IMR-90 (cell line): ENCODE measurements at regions of chr3 and their contacts with region 1.

Region 1: DNA sequence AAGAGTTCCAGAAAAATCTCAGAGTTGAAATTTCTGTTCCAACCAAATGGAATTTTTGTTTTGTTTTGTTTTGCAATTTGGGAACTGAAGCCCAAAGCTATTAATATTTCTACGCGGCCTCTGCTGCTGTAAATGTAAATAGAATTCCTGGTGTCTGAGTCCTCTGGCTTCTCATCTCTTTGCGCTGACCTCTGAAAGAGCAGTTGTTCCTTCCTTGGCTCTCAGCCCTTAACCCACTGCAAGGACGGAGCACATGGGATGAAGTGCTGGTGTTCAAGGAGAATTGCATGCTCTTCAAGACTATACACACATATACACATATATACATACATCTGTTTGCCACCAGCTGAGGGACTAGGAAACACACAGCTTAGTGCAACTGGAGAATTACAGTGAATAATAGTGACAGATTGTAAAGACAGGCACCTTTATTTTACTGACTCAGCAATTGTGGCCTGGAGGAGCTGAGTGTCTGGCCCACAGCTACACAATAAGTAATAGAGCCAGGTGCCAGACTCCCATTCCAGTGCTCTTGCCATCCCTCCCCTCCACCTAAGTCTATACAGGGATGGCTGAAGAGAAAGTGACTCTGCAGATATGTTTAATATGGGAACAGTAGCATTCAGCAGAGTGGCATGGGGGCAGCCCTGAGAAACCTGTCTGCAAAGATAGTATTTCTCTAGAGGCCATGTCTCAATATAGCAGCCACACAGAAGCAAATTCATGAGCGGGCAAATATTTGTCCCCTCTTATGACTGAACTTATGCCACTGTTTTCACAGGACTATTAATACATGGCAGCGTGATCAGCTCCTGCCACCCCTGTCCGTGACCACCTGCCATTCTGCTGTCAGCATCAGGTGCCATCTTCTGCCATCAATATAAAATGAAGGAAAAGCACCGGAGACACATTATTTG is 42.3 kb downstream of the NEK10 start:
- DNase-seq: peak; percentile 98
- ATAC-seq: peak; percentile 95
- H3K4me3 ChIP-seq: no peak overlapping the region
- H3K27ac ChIP-seq: peak overlapping the region; percentile 68; the same call in 1 of the 2 replicates
- H3K4me1 ChIP-seq: peaks cover 22% of the 10 kb centered on the region
- H3K27me3 ChIP-seq: no peaks in the 10 kb centered on the region
- CTCF ChIP-seq: no peak
- POLR2A ChIP-seq: no peak
- RAD21 ChIP-seq: no peak

Region 2: GRCh38 chr3:27368831-27369607 is 42.1 kb after region 1 on chr3 and contains the start of gene NEK10:
- CTCF ChIA-PET with region 1: no interaction called
- POLR2A ChIA-PET with region 1: no interaction called
- dilution Hi-C with region 1: no loop called
- in situ Hi-C with region 1: no loop called
- intact Hi-C with region 1: loop called (anchors 1 kb)
- DNase-seq: peak; percentile 85
- ATAC-seq: peak; percentile 98
- H3K4me3 ChIP-seq: peak within 1 kb of the TSS; percentile 58
- H3K27ac ChIP-seq: no peak within 1 kb of the TSS
- H3K4me1 ChIP-seq: no peaks in the 10 kb centered on the region
- H3K27me3 ChIP-seq: no peaks in the 10 kb centered on the region
- CTCF ChIP-seq: no peak
- POLR2A ChIP-seq: no peak
- RAD21 ChIP-seq: no peak
- total RNA-seq, gene NEK10: 6.6 and 7.5 TPM in 2 replicates